PC-3 (cell line): ENCODE measurements at regions of chr5 and their contacts with region 1.

Region 1: GRCh38 chr5:123610665-123611405 is 98.9 kb downstream of the CSNK1G3 start:
- DNase-seq: peak; percentile 68
- ATAC-seq: peak; percentile 45
- H3K4me3 ChIP-seq: no peak overlapping the region
- H3K27ac ChIP-seq: no peak overlapping the region
- H3K4me1 ChIP-seq: no peaks in the 10 kb centered on the region
- H3K27me3 ChIP-seq: no peaks in the 10 kb centered on the region
- CTCF ChIP-seq: peak; percentile 86

Region 2: DNA sequence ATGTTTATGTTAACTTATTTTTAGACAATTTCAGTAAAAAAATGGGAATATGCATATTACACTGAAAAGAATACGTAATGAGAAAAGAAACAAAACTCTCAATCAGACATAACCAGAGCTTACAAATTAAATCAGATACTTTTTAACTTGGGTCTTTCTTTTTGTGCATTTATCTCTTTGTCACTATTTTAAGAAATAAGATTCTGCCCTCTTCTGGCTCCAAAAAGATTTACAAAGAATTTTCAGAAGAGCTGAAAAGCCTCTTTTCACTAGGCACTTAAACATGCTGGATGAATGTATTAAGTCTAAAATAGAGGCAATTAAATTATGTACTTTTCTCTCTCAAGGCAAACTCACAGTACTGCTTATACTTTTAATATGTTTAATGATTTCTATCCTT is 243.1 kb before region 1 on chr5:
- CTCF ChIA-PET with region 1: no interaction called
- POLR2A ChIA-PET with region 1: no interaction called
- intact Hi-C with region 1: loop called (anchors 1 kb)
- DNase-seq: peak; percentile 31
- ATAC-seq: no peak
- H3K4me3 ChIP-seq: no peak overlapping the region
- H3K27ac ChIP-seq: no peak overlapping the region
- H3K4me1 ChIP-seq: no peaks in the 10 kb centered on the region
- H3K27me3 ChIP-seq: no peaks in the 10 kb centered on the region
- CTCF ChIP-seq: peak; percentile 61

Region 3: GRCh38 chr5:123795688-123796087 is 184.9 kb after region 1 on chr5:
- CTCF ChIA-PET with region 1: no interaction called
- POLR2A ChIA-PET with region 1: no interaction called
- intact Hi-C with region 1: no loop called
- DNase-seq: no peak
- ATAC-seq: no peak
- H3K4me3 ChIP-seq: no peak overlapping the region
- H3K27ac ChIP-seq: no peak overlapping the region
- H3K4me1 ChIP-seq: no peaks in the 10 kb centered on the region
- H3K27me3 ChIP-seq: no peaks in the 10 kb centered on the region
- CTCF ChIP-seq: no peak